ENCODE measurements at regions of chr3 and their contacts with region 1.

Region 1: DNA sequence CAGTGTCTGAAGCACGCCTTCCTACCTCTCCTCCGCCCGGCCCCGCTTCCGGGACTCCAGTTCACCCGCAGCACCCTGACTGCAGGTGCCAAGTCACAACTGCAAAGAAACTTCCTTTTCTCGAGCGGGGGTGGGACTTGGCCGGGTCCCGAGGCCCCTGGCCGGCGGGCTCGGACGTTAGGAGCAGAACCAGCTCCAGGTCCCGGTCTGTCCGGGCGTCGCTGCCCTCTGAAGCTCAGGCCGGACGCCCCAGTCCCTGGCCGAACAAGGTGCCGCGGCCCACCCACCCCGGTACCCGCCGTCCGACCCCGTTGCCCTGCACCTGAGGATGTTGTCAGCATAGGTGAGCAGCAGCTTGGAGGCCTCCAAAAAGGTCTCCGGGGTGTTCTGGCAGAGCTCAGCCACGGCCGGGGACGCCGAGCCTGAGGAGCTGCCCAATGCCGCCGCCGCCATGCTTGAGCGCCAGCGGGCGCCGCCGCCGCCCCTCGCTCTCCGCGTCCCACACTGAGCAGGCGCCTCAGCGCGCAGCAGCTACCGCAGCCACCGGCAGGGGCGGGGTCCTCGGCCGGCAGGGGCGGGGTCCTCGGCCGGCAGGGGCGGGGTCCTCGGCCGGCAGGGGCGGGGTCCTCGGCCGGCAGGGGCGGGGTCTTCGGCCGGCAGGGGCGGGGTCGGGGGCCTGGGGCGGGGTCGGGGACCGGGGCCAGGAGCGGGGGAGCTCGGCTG is at the start of gene NGLY1:
- DNase-seq: peak; percentile 80 to 91
- ATAC-seq: peak; percentile 86 to 96 (median 92)
- H3K4me3 ChIP-seq: peak within 1 kb of the TSS; percentile 99
- H3K4me3 Mint-ChIP-seq: peak within 1 kb of the TSS; percentile 92
- H3K27ac ChIP-seq: peak within 1 kb of the TSS; percentile 96
- H3K27ac Mint-ChIP-seq: peak within 1 kb of the TSS; percentile 85 to 87
- H3K4me1 ChIP-seq: peaks cover 19% of the 10 kb centered on the region
- H3K4me1 Mint-ChIP-seq: peaks cover 36 to 37% of the 10 kb centered on the region in 2 donors
- H3K27me3 ChIP-seq: no peaks in the 10 kb centered on the region
- H3K27me3 Mint-ChIP-seq: no peaks in the 10 kb centered on the region
- CTCF ChIP-seq: no peak
- total RNA-seq, gene NGLY1: 63.0 to 93.5 (median 88.6) TPM

Region 2: DNA sequence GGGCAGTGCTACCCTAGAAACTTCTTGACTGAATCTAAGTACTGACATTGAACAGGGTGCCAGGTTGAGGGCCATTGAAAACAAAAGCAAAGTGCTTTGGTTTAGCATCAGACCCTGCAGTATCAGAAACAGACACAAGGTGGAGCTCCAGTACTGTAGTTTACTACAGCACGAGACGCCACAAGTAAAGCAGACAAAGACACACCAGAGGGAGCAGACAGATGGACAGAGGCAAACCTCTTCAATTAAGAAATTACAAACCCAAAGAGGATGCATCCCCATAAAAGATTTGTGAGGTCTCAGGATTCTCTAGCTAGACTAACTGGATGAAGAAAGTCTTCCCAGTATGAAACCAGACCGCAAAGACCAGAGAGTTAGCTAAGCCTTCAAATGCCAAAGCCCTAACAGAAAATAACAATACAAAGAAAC is 135.0 kb before region 1 on chr3:
- intact Hi-C with region 1: no loop called
- DNase-seq: peak; percentile 73 to 91
- ATAC-seq: peak; percentile 97 to 98 (median 98)
- H3K4me3 ChIP-seq: no peak overlapping the region
- H3K4me3 Mint-ChIP-seq: no peak overlapping the region
- H3K27ac ChIP-seq: no peak overlapping the region
- H3K27ac Mint-ChIP-seq: peak overlapping the region; percentile 65 to 66
- H3K4me1 ChIP-seq: no peaks in the 10 kb centered on the region
- H3K4me1 Mint-ChIP-seq: peaks cover 55 to 57% of the 10 kb centered on the region in 2 donors
- H3K27me3 ChIP-seq: no peaks in the 10 kb centered on the region
- H3K27me3 Mint-ChIP-seq: no peaks in the 10 kb centered on the region
- CTCF ChIP-seq: peak; percentile 95

Region 3: GRCh38 chr3:25664810-25665314 is 118.2 kb before region 1 on chr3 and contains the start of gene TOP2B:
- intact Hi-C with region 1: loop called (anchors 2 kb)
- DNase-seq: peak; percentile 94 to 97
- ATAC-seq: peak; percentile 88 to 98 (median 91)
- H3K4me3 ChIP-seq: peak within 1 kb of the TSS; percentile 90
- H3K4me3 Mint-ChIP-seq: peak within 1 kb of the TSS; percentile 99
- H3K27ac ChIP-seq: peak within 1 kb of the TSS; percentile 90
- H3K27ac Mint-ChIP-seq: peak within 1 kb of the TSS; percentile 99
- H3K4me1 ChIP-seq: peaks cover 16% of the 10 kb centered on the region
- H3K4me1 Mint-ChIP-seq: peaks cover 51 to 54% of the 10 kb centered on the region in 2 donors
- H3K27me3 ChIP-seq: no peaks in the 10 kb centered on the region
- H3K27me3 Mint-ChIP-seq: peaks cover 0 to 2% of the 10 kb centered on the region in 2 donors
- CTCF ChIP-seq: no peak
- total RNA-seq, gene TOP2B: 126 to 180 (median 152) TPM

Region 4: GRCh38 chr3:25747033-25747432 is 36.1 kb before region 1 on chr3:
- intact Hi-C with region 1: no loop called
- DNase-seq: no peak
- ATAC-seq: no peak
- H3K4me3 ChIP-seq: no peak overlapping the region
- H3K4me3 Mint-ChIP-seq: no peak overlapping the region
- H3K27ac ChIP-seq: no peak overlapping the region
- H3K27ac Mint-ChIP-seq: no peak overlapping the region
- H3K4me1 ChIP-seq: no peaks in the 10 kb centered on the region
- H3K4me1 Mint-ChIP-seq: peaks cover 11 to 29% of the 10 kb centered on the region in 2 donors
- H3K27me3 ChIP-seq: no peaks in the 10 kb centered on the region
- H3K27me3 Mint-ChIP-seq: no peaks in the 10 kb centered on the region
- CTCF ChIP-seq: no peak

Region 5: GRCh38 chr3:25856902-25857518 is 73.9 kb after region 1 on chr3:
- intact Hi-C with region 1: loop called (anchors 5 kb)
- DNase-seq: peak in 1 of 2 donors; percentile 69
- ATAC-seq: peak; percentile 71 to 90 (median 86)
- H3K4me3 ChIP-seq: no peak overlapping the region
- H3K4me3 Mint-ChIP-seq: no peak overlapping the region
- H3K27ac ChIP-seq: no peak overlapping the region
- H3K27ac Mint-ChIP-seq: no peak overlapping the region
- H3K4me1 ChIP-seq: no peaks in the 10 kb centered on the region
- H3K4me1 Mint-ChIP-seq: peaks cover 0 to 4% of the 10 kb centered on the region in 2 donors
- H3K27me3 ChIP-seq: no peaks in the 10 kb centered on the region
- H3K27me3 Mint-ChIP-seq: no peaks in the 10 kb centered on the region
- CTCF ChIP-seq: peak; percentile 87